Naive thymus-derived CD4-positive, alpha-beta T cell (primary cell): ENCODE measurements at regions of chr3 and their contacts with region 1.

Region 1: DNA sequence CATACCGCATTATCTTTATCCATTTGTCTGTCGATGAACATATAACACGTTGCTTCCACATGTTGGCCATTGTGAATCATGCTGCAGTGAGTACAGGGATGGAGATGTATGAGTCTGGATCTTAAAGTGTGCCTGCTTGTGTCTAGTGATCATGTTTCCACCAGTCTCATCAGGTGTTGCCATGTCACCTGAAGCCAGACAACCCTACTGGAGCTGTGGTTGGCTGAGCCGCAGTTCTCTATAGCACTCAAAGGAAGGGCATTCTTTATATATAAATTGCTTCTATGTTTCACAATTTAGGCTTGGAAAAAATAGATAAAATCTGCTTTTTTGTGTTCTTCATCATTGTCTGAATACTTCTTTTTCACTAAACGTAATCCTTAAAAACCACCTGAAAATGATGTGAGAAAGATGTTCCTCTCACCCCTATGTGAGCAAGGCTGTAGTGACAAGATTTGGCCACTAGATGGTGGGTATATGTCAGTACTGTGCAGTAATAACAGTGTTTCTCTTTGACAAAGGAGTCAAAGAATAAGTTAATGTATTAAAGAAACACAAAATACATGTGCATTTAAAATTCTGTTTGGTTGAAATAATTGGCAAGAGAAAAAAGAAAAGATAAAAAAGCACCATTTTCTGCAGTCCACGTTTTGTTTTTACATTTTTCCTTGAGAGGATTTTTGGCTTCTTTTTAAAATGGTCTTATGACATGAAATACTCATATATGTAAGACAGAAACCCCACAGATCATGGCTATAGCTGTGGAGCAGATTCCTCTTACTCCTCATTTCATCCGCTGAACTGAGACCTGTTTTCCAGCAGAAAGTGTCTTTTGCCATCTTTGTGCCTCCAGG is 394.5 kb upstream of the DPPA4 start:
- DNase-seq: peak; percentile 11 to 68 (median 55)
- ATAC-seq: peak; percentile 87
- H3K4me3 ChIP-seq: no peak overlapping the region
- H3K4me3 Mint-ChIP-seq: no peak overlapping the region
- H3K27ac ChIP-seq: no peak overlapping the region
- H3K27ac Mint-ChIP-seq: no peak overlapping the region
- H3K4me1 ChIP-seq: no peaks in the 10 kb centered on the region
- H3K4me1 Mint-ChIP-seq: peaks cover 0 to 12% (median 4%) of the 10 kb centered on the region in 7 donors
- H3K27me3 ChIP-seq: no peaks in the 10 kb centered on the region
- H3K27me3 Mint-ChIP-seq: no peaks in the 10 kb centered on the region

Region 2: GRCh38 chr3:109532257-109533216 is 199.3 kb before region 1 on chr3:
- CTCF ChIA-PET with region 1: no interaction called
- POLR2A ChIA-PET with region 1: no interaction called
- intact Hi-C with region 1: loop called in 1 of 2 experiments (anchors 10 kb)
- DNase-seq: peak in 7 of 9 donors; percentile 3 to 39 (median 20)
- ATAC-seq: peak; percentile 67
- H3K4me3 ChIP-seq: no peak overlapping the region
- H3K4me3 Mint-ChIP-seq: no peak overlapping the region
- H3K27ac ChIP-seq: no peak overlapping the region
- H3K27ac Mint-ChIP-seq: no peak overlapping the region
- H3K4me1 ChIP-seq: no peaks in the 10 kb centered on the region
- H3K4me1 Mint-ChIP-seq: no peaks in the 10 kb centered on the region
- H3K27me3 ChIP-seq: no peaks in the 10 kb centered on the region
- H3K27me3 Mint-ChIP-seq: peaks cover 0 to 5% (median 0%) of the 10 kb centered on the region in 5 donors

Region 3: DNA sequence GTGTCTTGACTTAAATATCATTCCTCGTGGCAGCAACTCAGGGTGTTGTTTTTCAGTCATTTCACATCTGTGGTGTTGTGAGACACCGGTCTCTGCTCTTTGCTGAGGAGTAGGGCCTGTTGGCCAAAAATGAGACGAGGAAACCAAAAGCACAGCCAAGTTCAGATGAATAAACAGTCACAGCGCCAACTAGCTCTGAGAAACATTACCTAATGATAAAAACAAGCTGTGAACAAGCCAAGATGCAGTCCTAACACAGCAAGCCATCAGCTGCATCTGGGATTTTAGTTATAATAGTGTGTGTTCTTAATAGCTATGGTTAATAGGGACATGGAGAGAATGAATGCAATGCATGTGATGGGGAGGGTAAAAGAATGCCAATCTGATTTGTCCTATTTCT is 448.9 kb after region 1 on chr3:
- CTCF ChIA-PET with region 1: no interaction called
- POLR2A ChIA-PET with region 1: no interaction called
- intact Hi-C with region 1: loop called in 1 of 2 experiments (anchors 10 kb)
- DNase-seq: no peak
- ATAC-seq: no peak
- H3K4me3 ChIP-seq: no peak overlapping the region
- H3K4me3 Mint-ChIP-seq: no peak overlapping the region
- H3K27ac ChIP-seq: no peak overlapping the region
- H3K27ac Mint-ChIP-seq: no peak overlapping the region
- H3K4me1 ChIP-seq: no peaks in the 10 kb centered on the region
- H3K4me1 Mint-ChIP-seq: no peaks in the 10 kb centered on the region
- H3K27me3 ChIP-seq: no peaks in the 10 kb centered on the region
- H3K27me3 Mint-ChIP-seq: peaks cover 0 to 6% (median 0%) of the 10 kb centered on the region in 5 donors

Region 4: GRCh38 chr3:111338059-111338698 is 1606.3 kb after region 1 on chr3:
- CTCF ChIA-PET with region 1: no interaction called
- POLR2A ChIA-PET with region 1: no interaction called
- intact Hi-C with region 1: loop called in 1 of 2 experiments (anchors 5 kb)
- DNase-seq: peak in 5 of 9 donors; percentile 22 to 43 (median 23)
- ATAC-seq: no peak
- H3K4me3 ChIP-seq: no peak overlapping the region
- H3K4me3 Mint-ChIP-seq: no peak overlapping the region
- H3K27ac ChIP-seq: no peak overlapping the region
- H3K27ac Mint-ChIP-seq: peak overlapping the region in 2 of 9 donors; percentile 3 to 4
- H3K4me1 ChIP-seq: no peaks in the 10 kb centered on the region
- H3K4me1 Mint-ChIP-seq: peaks cover 2 to 31% (median 12%) of the 10 kb centered on the region in 7 donors
- H3K27me3 ChIP-seq: no peaks in the 10 kb centered on the region
- H3K27me3 Mint-ChIP-seq: no peaks in the 10 kb centered on the region